Activated T-helper 2 cell treated with anti-CD3 and anti-CD28 coated beads, Interferon-gamma antibody, Interleukin-2, Interleukin-4, amounts not matched to agents 10 μg/mL and 5 μg/mL and 100 μg/mL, durations not matched to agents 14 hours and 24 hours and 36 hours (primary cell): ENCODE measurements at regions of chr2 and their contacts with region 1.

Region 1: DNA sequence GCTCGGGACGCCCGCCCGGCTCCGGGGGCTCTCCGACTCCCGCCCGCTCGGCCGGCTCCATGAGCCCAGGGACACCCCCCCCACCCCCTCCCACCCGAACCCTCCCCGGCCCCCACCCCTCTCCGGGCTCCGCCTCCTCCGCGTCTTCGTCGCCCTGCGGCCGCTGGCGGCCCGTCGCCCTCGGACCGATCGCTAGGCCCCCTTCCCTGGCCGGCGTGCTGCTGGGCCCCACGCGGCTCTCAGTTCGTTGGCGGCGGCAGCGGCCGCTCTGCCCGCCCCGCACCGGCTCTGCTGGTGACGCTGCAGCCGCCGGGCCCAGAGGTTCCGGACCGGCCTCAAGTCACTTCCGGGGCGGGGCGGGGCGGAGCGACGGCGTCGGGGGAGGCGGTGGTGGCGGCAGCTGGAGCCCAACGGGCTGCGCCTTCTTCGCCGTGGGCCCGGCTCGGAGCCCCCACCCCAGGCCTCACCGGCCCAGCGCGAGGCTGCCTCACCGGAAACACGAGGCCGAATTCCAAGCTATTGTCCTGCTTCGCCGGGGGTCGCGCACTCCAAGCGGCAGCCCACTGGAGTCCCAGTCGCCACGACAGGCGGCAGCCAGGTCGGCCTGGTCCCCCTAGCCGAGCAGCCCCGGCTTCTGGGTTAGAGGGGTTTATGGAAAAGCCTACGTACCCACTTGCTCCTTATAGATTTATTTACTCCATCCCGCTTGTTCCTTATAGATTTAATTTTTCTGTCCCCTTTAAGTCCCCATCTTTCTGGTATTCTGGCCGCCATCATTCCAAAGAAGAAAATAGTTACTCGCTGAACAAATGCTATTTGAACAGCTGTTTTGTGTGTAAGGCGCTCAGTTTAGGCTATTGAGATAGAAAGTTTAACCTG is at the start of gene PSME4:
- DNase-seq: peak; percentile 90
- H3K4me3 Mint-ChIP-seq: peak within 1 kb of the TSS; percentile 93
- H3K27ac Mint-ChIP-seq: peak within 1 kb of the TSS; percentile 96
- H3K4me1 Mint-ChIP-seq: peaks cover 30% of the 10 kb centered on the region
- H3K27me3 Mint-ChIP-seq: no peaks in the 10 kb centered on the region
- total RNA-seq, gene PSME4: 52.0 and 57.3 TPM in 2 replicates

Region 2: GRCh38 chr2:53786705-53787612 is 184.0 kb before region 1 on chr2 and contains the starts of genes ASB3 and ERLEC1:
- intact Hi-C with region 1: loop called (anchors 2 kb)
- DNase-seq: peak; percentile 87
- H3K4me3 Mint-ChIP-seq: peak within 1 kb of the TSS; percentile 99
- H3K27ac Mint-ChIP-seq: peak within 1 kb of the TSS; percentile 97
- H3K4me1 Mint-ChIP-seq: peaks cover 38% of the 10 kb centered on the region
- H3K27me3 Mint-ChIP-seq: no peaks in the 10 kb centered on the region
- total RNA-seq, gene ASB3: 24.3 and 26.4 TPM in 2 replicates
- total RNA-seq, gene ERLEC1: 36.0 and 36.2 TPM in 2 replicates

Region 3: DNA sequence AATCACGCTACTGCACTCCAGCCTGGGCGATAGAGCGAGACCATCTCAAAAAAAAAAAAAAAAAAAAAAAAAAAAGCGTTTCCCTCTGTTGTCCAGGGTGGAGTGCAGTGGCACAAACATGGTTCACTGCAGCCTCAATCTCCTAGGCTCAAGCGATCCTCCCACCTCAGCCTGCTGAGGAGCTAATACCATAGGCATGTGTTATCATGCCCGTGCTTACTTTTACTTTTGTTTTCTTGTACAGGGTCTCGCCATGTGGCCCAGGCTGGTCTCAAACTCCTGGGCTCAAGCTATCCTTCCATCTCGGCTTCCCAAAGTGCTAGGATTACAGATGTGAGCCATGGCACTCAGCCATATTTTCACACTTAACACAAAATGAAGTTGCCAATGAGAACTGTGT is 37.6 kb before region 1 on chr2:
- intact Hi-C with region 1: loop called (anchors 1 kb)
- DNase-seq: no peak
- H3K4me3 Mint-ChIP-seq: no peak overlapping the region
- H3K27ac Mint-ChIP-seq: no peak overlapping the region
- H3K4me1 Mint-ChIP-seq: peaks cover 5% of the 10 kb centered on the region
- H3K27me3 Mint-ChIP-seq: no peaks in the 10 kb centered on the region

Region 4: GRCh38 chr2:54041135-54041534 is 70.2 kb after region 1 on chr2:
- intact Hi-C with region 1: loop called (anchors 2 kb)
- DNase-seq: no peak
- H3K4me3 Mint-ChIP-seq: no peak overlapping the region
- H3K27ac Mint-ChIP-seq: no peak overlapping the region
- H3K4me1 Mint-ChIP-seq: no peaks in the 10 kb centered on the region
- H3K27me3 Mint-ChIP-seq: no peaks in the 10 kb centered on the region

Region 5: DNA sequence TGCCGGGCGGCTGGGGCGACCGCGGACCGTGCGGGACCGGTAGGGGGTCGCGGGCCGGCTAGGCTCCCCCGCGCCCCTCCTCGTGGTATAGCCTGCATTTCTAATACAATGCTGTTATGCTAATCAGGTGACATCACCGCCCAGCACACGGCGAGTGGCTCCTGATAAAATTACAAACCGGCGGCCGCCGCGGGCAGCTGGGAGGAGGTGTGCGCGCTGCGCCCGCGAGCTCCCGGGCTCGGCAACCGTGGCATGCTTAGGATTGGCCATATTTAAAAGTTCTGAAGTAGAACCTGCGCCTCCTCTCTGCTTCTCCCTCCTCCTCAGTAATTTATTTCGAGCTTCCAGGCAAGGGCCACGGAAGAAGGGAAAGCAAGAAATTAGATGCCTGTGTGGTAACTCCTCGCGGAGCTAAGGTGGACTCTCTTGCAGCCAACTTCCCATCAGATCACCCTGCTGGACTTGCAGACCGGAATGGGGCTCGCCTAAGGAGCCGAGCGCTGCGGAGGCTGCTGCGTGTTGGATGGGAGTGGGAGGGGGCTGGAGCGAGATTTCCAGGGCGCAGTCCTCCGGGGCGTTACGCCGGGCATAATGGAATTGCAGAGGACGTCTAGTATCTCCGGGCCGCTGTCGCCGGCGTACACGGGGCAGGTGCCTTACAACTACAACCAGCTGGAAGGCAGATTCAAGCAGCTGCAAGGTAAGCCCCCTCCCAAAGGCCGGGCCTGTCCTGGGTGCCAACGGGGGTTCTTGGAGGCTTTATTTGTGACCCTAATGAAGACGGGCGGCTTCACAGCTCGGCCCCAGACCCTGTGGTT is 587.4 kb after region 1 on chr2:
- intact Hi-C with region 1: loop called (anchors 10 kb)
- DNase-seq: peak; percentile 69
- H3K4me3 Mint-ChIP-seq: peak overlapping the region; percentile 90
- H3K27ac Mint-ChIP-seq: peak overlapping the region; percentile 73
- H3K4me1 Mint-ChIP-seq: peaks cover 51% of the 10 kb centered on the region
- H3K27me3 Mint-ChIP-seq: no peaks in the 10 kb centered on the region